ENCODE measurements at regions of chr12 and their contacts with region 1.

Region 1: GRCh38 chr12:114131824-114132223 is 165.7 kb upstream of the RBM19 start:
- DNase-seq: no peak
- H3K4me3 ChIP-seq: no peak overlapping the region
- H3K27ac ChIP-seq: no peak overlapping the region
- H3K4me1 ChIP-seq: no peaks in the 10 kb centered on the region; a peak in 2 of 7 replicates
- H3K27me3 ChIP-seq: peaks cover 0 to 13% (median 1%) of the 10 kb centered on the region in 4 experiments; a peak in 3 of 7 replicates
- CTCF ChIP-seq: peak; percentile 7 to 61 (median 59)
- EP300 ChIP-seq: no peak
- POLR2A ChIP-seq: no peak
- RAD21 ChIP-seq: peak; percentile 53 to 74

Region 2: GRCh38 chr12:113980537-113981337 is 151.1 kb before region 1 on chr12:
- CTCF ChIA-PET with region 1: interaction called, 14 read pairs
- POLR2A ChIA-PET with region 1: no interaction called
- DNase-seq: peak; percentile 36 to 66
- H3K4me3 ChIP-seq: no peak overlapping the region
- H3K27ac ChIP-seq: no peak overlapping the region
- H3K4me1 ChIP-seq: no peaks in the 10 kb centered on the region
- H3K27me3 ChIP-seq: peaks cover 0 to 5% (median under 1%) of the 10 kb centered on the region in 4 experiments; a peak in 1 of 7 replicates
- CTCF ChIP-seq: peak; percentile 48 to 90 (median 88)
- EP300 ChIP-seq: no peak
- POLR2A ChIP-seq: no peak
- RAD21 ChIP-seq: peak; percentile 99

Region 3: DNA sequence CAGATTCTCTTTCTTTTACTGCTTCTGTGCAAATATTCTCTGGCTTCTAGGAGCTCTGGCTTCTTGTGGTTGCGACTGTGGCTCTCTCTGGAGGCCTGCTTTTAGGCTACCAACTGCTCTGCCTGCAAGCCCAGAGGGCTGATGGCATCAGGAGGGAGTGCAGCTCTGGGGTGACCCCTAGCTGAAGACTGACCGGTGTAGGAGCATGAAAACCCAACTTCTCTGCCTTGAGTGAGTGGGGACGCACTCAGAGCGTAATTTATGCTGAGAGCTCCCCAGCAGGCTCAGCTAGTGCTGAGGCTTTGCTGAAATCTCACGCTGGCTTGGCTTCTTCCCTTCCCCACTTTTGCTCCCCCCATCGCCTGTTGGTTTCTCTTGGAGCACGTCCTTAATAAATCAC is 135.8 kb before region 1 on chr12:
- CTCF ChIA-PET with region 1: interaction called, 12 read pairs
- POLR2A ChIA-PET with region 1: no interaction called
- DNase-seq: peak; percentile 23 to 55
- H3K4me3 ChIP-seq: no peak overlapping the region
- H3K27ac ChIP-seq: no peak overlapping the region
- H3K4me1 ChIP-seq: no peaks in the 10 kb centered on the region
- H3K27me3 ChIP-seq: no peaks in the 10 kb centered on the region
- CTCF ChIP-seq: peak; percentile 52 to 77 (median 64)
- EP300 ChIP-seq: no peak
- POLR2A ChIP-seq: no peak
- RAD21 ChIP-seq: peak; percentile 57 to 68

Region 4: DNA sequence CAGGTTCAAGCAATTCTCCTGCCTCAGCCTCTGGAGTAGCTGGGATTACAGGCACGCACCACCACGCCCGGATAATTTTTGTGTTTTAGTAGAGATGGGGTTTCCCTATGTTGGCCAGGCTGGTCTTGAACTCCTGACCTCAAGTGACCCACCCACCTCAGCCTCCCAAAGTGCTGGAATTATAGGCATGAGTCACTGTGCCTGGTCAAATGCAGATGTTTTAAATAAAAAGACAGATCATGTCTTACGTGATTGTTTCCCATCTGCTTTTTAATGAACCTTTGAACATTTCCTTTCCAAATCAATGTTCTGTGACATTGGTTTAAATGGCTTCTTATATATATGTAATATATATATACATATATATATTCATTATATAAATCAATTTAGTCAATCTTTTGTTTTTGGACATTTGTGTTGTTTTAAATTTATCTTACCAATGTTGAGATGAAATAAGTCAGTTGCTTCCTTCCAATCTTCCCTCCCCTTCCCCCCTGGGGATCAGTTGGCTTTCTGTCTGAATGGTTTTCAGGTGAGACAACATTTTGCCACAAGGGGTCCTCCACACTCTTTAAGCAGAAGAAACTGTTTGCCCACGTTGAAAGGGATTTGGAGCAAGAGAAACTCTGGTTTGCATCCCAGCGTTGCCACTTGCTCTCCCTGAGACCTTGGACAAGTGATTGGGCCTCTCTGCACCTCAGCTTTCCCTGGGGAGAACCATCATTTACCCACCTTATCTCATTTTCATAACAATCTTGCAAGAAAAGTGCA is 118.1 kb before region 1 on chr12:
- CTCF ChIA-PET with region 1: interaction called, 38 read pairs
- POLR2A ChIA-PET with region 1: no interaction called
- DNase-seq: peak; percentile 33 to 61
- H3K4me3 ChIP-seq: no peak overlapping the region
- H3K27ac ChIP-seq: no peak overlapping the region
- H3K4me1 ChIP-seq: no peaks in the 10 kb centered on the region
- H3K27me3 ChIP-seq: no peaks in the 10 kb centered on the region
- CTCF ChIP-seq: peak in 2 of 3 experiments; percentile 78; a peak in 3 of 4 replicates
- EP300 ChIP-seq: no peak
- POLR2A ChIP-seq: no peak
- RAD21 ChIP-seq: peak; percentile 93

Region 5: DNA sequence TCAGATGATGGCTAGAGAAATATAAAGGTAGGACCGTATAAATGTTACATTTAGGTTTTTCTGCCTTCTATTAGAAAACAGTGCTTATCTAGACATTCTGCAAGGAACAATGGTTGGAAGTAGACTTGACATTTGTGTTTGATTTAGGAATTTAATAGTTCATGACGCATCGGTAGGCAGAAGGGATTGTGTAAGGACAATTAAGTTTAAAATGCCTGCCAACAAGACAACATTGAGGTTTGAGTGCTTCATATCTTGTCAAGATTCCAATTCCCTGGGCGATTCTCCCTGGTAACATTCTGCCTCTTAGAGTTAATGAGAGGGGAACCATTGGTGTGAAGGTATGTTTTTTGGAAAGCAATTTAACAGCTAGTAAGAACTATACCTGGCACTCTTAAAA is 21.1 kb after region 1 on chr12:
- CTCF ChIA-PET with region 1: interaction called, 13 read pairs
- POLR2A ChIA-PET with region 1: no interaction called
- DNase-seq: no peak
- H3K4me3 ChIP-seq: no peak overlapping the region
- H3K27ac ChIP-seq: no peak overlapping the region
- H3K4me1 ChIP-seq: no peaks in the 10 kb centered on the region
- H3K27me3 ChIP-seq: 0 out of 7 replicates have a peak, but pooled peaks cover 0 to 8% (median 0%) of the 10 kb centered on the region in 4 experiments
- CTCF ChIP-seq: no peak
- EP300 ChIP-seq: no peak
- POLR2A ChIP-seq: no peak
- RAD21 ChIP-seq: no peak